ENCODE measurements at regions of chr3 and their contacts with region 1.

Region 1: GRCh38 chr3:70090322-70090913 is 90.9 kb downstream of the SAMMSON start:
- DNase-seq: no peak
- H3K4me3 ChIP-seq: no peak overlapping the region
- H3K27ac ChIP-seq: no peak overlapping the region
- H3K27me3 ChIP-seq: no peaks in the 10 kb centered on the region
- CTCF ChIP-seq: peak; percentile 72

Region 2: GRCh38 chr3:69842789-69843188 is 247.6 kb before region 1 on chr3:
- CTCF ChIA-PET with region 1: no interaction called
- POLR2A ChIA-PET with region 1: no interaction called
- DNase-seq: no peak
- H3K4me3 ChIP-seq: no peak overlapping the region
- H3K27ac ChIP-seq: no peak overlapping the region
- H3K27me3 ChIP-seq: no peaks in the 10 kb centered on the region
- CTCF ChIP-seq: no peak

Region 3: DNA sequence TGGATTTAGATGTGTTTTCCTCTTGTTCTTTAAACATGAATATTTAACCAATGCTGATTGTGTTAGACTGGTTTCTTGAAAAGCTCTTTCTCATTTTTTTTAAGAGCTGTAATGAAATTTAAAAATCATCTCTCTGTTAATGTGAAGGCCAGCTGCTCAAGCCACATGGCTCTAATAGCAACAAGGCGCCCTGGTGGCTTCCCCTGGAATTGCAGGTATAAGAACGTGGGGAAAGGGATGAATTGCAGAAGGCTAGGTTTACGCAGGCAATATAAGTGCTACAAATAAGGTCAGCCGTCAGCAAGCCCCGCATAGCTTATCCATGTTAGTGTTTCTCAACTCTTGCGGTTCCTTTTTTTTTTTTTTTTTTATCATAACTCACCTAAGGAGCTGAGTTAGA is 17.7 kb after region 1 on chr3:
- CTCF ChIA-PET with region 1: interaction called, 23 read pairs
- POLR2A ChIA-PET with region 1: no interaction called
- DNase-seq: no peak
- H3K4me3 ChIP-seq: no peak overlapping the region
- H3K27ac ChIP-seq: no peak overlapping the region
- H3K27me3 ChIP-seq: no peaks in the 10 kb centered on the region
- CTCF ChIP-seq: peak; percentile 61

Region 4: DNA sequence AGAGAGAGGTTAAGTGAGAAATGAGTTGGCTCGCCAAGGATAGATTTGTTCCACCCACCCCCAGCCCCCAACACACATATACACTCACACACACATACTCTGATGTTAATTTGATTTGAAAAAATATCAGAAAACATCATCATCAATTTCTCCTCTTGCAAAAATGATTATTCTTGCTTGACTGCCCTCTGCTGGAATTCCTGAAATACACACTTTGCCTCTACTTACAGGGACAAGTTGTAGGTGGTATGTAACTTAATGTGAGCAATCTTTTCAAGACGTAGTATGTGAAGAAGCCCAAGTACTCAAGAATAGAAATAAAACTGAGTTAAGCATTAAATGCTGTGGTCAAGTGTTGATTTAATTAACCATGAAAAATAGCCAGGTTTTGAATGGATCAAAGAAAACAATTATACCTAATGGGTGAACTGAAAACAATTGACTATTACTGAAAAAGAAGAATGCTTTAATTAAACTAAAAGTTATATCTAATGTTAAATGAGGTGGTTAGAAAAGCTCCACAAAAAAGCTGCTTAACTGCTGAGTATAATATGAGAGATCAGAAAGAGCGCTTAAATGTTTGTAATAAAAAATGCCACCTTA is 268.7 kb after region 1 on chr3:
- CTCF ChIA-PET with region 1: interaction called, 16 read pairs
- POLR2A ChIA-PET with region 1: no interaction called
- DNase-seq: peak; percentile 11
- H3K4me3 ChIP-seq: no peak overlapping the region
- H3K27ac ChIP-seq: no peak overlapping the region
- H3K27me3 ChIP-seq: no peaks in the 10 kb centered on the region
- CTCF ChIP-seq: peak; percentile 75

Measured in AG04450 (cell line).